A549 (cell line): ENCODE measurements at regions of chr12 and their contacts with region 1.

Region 1: GRCh38 chr12:111812881-111813741 is 28.9 kb upstream of the MAPKAPK5 start:
- DNase-seq: peak; percentile 89 to 90
- ATAC-seq: peak; percentile 95 to 96
- H3K4me3 ChIP-seq: no peak overlapping the region
- H3K27ac ChIP-seq: no peak overlapping the region
- H3K4me1 ChIP-seq: peaks cover 3% of the 10 kb centered on the region; the same call in 1 of the 3 replicates
- CTCF ChIP-seq: peak; percentile 87
- EP300 ChIP-seq: no peak
- POLR2A ChIP-seq: no peak
- RAD21 ChIP-seq: peak; percentile 85 to 91

Region 2: DNA sequence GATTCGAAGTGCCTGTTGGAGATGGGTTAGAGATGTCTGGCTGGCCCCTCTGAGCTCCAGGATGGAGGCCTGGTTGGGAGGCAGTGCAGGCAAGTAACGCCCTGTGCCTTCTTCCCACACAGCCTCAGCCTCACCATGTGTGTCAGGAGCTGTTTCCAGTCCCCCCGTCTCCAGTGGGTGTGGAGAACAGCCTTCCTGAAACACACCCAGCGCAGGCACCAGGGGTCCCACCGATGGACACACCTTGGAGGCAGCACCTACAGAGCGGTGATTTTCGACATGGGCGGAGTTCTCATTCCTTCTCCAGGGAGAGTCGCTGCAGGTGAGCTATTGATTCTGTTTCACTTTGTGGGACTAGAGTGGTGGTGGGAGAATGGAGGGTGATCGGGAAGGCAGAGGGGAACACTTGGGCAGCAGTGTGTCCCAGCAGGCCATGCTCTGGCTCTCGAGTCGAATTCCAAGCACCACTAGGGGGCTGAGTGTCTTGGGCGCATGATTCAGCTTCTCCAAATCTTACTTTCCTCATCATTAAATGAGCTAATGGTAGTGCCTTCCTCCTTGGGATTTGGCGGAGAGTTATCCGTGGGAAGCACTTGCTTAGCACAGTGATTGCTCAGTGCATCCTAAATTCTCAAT is 120.4 kb before region 1 on chr12:
- CTCF ChIA-PET with region 1: interaction called, 14 read pairs
- POLR2A ChIA-PET with region 1: no interaction called
- DNase-seq: peak; percentile 42 to 68
- ATAC-seq: peak; percentile 91 to 92
- H3K4me3 ChIP-seq: no peak overlapping the region
- H3K27ac ChIP-seq: no peak overlapping the region
- H3K4me1 ChIP-seq: no peaks in the 10 kb centered on the region
- CTCF ChIP-seq: peak; percentile 38
- EP300 ChIP-seq: no peak
- POLR2A ChIP-seq: no peak
- RAD21 ChIP-seq: 0 out of 5 replicates have a peak, but pooled peaks of 1 of the 2 experiments have one; percentile 11

Region 3: DNA sequence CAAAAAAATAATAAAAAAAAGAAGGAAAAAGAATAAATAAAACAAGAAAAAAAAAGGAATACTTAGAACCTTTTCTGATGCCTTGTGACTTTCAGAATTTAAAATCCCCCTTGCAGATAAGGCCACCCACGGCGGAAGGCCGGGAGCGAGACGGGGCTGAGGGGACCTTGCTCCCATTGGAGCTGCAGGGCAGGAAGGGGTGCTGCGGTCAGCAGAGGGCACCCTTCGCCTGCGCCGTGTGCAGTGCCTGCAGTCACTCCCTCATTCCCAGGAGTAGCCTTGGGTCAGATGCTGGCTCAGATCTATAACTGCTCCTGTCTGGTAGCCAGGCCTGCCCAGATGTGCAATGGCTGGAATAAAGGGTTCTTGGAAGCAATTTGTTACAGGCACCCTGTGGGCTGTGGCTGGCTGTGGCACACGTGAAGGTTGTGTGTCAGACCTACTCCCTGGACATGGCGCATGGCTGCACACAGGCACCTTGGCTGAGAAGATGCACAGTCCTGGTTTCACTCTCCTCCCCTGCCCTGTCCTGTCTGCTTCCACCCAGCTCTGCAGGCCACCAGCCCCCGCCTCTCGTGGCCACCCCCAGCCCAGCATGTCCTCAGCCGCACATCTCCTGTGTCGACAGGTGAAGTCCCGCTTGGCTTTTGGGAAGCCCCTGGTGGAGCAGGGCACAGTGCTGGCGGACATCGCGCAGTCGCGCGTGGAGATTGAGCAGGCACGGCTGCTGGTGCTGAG is 59.8 kb before region 1 on chr12:
- CTCF ChIA-PET with region 1: interaction called, 150 read pairs
- POLR2A ChIA-PET with region 1: interaction called, 3 read pairs
- DNase-seq: peak; percentile 63 to 82
- ATAC-seq: peak; percentile 88 to 97
- H3K4me3 ChIP-seq: no peak overlapping the region
- H3K27ac ChIP-seq: no peak overlapping the region
- H3K4me1 ChIP-seq: no peaks in the 10 kb centered on the region
- CTCF ChIP-seq: peak; percentile 79
- EP300 ChIP-seq: no peak
- POLR2A ChIP-seq: no peak
- RAD21 ChIP-seq: peak; percentile 89 to 94

Region 4: DNA sequence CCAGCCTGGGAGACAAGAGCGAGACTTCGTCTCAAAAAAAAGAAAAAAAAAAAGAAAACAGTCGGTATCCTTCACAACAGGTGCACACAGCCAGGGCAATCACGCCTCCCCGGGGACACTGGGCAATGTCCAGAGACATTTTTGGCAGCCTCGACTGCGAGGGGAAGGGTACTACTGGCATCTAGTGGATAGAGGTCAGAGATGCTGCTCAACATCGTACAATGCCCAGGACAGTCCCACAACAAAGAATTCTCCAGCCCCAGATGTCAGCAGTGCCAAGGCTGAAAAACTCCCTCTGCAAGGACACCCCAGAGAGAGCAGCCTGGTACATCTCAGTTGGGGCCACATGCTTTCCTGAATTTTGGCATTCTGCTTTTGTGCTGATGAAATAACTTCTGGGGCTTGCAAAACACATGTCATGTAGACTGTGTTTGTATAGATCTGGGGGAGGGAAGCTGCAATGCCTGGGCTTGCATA is 24.9 kb before region 1 on chr12:
- CTCF ChIA-PET with region 1: interaction called, 19 read pairs
- POLR2A ChIA-PET with region 1: no interaction called
- DNase-seq: peak in 1 of 2 experiments; percentile 51
- ATAC-seq: peak; percentile 68 to 78
- H3K4me3 ChIP-seq: no peak overlapping the region
- H3K27ac ChIP-seq: peak overlapping the region; percentile 60 to 70
- H3K4me1 ChIP-seq: peaks cover 34% of the 10 kb centered on the region
- CTCF ChIP-seq: peak; percentile 56
- EP300 ChIP-seq: no peak
- POLR2A ChIP-seq: no peak
- RAD21 ChIP-seq: peak; percentile 74 to 78

Region 5: DNA sequence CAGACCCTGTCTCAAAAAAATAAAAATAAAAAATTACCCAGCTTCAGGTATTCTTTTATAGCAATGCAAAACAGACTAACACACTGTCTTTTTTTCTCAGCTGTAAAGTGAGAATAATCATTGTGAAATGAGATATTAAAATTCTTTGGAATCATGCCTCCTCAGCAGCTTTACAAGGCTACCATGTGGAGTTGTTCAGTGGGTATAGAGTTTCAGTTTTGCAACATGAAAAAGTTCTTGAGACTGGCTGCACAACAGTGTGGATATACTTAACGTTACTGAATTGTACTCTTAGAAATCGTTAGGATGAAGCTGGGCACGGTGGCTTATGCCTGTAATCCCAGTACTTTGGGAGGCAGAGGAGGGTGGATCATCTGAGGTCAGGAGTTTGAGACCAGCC is 13.2 kb after region 1 on chr12:
- CTCF ChIA-PET with region 1: interaction called, 12 read pairs
- POLR2A ChIA-PET with region 1: no interaction called
- DNase-seq: no peak
- ATAC-seq: no peak
- H3K4me3 ChIP-seq: no peak overlapping the region
- H3K27ac ChIP-seq: no peak overlapping the region
- H3K4me1 ChIP-seq: no peaks in the 10 kb centered on the region
- CTCF ChIP-seq: no peak
- EP300 ChIP-seq: no peak
- POLR2A ChIP-seq: no peak
- RAD21 ChIP-seq: no peak

Region 6: GRCh38 chr12:111975161-111975931 is 162.2 kb after region 1 on chr12:
- CTCF ChIA-PET with region 1: no interaction called
- POLR2A ChIA-PET with region 1: no interaction called
- DNase-seq: no peak
- ATAC-seq: no peak
- H3K4me3 ChIP-seq: no peak overlapping the region
- H3K27ac ChIP-seq: no peak overlapping the region
- H3K4me1 ChIP-seq: peaks cover 10% of the 10 kb centered on the region; the same call in 1 of the 3 replicates
- CTCF ChIP-seq: no peak
- EP300 ChIP-seq: no peak
- POLR2A ChIP-seq: no peak
- RAD21 ChIP-seq: no peak